H1 (cell line): ENCODE measurements at regions of chr3 and their contacts with region 1.

Region 1: GRCh38 chr3:44648564-44649229 is at the start of gene ZNF35:
- DNase-seq: peak; percentile 77 to 86
- H3K4me3 ChIP-seq: peak within 1 kb of the TSS; percentile 87 to 97 (median 90)
- H3K27ac ChIP-seq: peak within 1 kb of the TSS; percentile 61; the same call in 1 of the 2 replicates
- H3K4me1 ChIP-seq: no peaks in the 10 kb centered on the region
- H3K27me3 ChIP-seq: no peaks in the 10 kb centered on the region
- CTCF ChIP-seq: no peak; a peak in 1 of 4 replicates
- EP300 ChIP-seq: no peak
- POLR2A ChIP-seq: peak; percentile 79 to 87
- RAD21 ChIP-seq: peak in 1 of 2 experiments; percentile 2; a peak in 1 of 4 replicates
- total RNA-seq, gene ZNF35: 19.0 and 20.0 TPM in 2 replicates

Region 2: DNA sequence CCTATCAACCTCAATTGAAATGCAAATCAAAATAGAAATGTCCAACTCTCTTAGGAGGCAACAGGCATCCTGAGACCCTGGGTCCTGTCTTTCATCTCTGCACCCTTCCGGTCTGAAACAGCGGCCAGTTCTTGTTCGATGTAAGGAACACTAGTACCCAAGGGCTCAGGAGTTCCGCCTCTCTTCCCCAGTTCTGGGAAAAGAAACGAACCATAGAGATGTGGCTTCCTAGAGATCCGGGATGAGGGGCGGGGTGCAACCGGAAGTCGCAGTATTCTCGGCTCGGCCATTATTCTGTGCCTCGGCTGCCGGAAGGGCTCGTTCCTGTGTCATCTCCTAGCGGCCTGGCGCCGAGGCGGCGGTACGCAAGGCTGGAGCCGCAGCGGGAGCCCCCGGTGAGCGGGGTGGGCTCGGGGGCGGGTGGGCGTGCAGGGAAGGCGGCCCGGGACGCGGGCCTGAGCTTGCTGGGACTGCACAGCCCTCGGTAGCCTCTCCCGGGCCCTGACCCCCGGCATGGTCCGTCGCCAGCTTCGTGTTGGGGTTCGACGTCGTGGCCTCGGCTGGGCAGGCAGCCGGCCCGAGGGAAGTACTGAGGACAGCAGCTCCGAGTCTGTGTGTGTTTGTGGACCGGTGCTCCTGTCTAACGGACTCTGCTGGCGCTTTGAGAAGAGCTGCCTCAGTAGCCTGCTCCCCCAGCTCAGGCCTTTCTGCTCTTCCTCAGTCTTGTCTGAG is 23.8 kb before region 1 on chr3 and contains the start of gene ZNF197:
- CTCF ChIA-PET with region 1: interaction called, 6 read pairs
- POLR2A ChIA-PET with region 1: interaction called, 20 read pairs
- DNase-seq: peak; percentile 74 to 84
- H3K4me3 ChIP-seq: peak within 1 kb of the TSS; percentile 77 to 94 (median 82)
- H3K27ac ChIP-seq: peak within 1 kb of the TSS; percentile 67; the same call in 1 of the 2 replicates
- H3K4me1 ChIP-seq: peaks cover 0 to 5% (median 0%) of the 10 kb centered on the region in 4 experiments; a peak in 1 of 7 replicates
- H3K27me3 ChIP-seq: no peaks in the 10 kb centered on the region
- CTCF ChIP-seq: peak in 1 of 3 experiments; percentile 15; a peak in 1 of 4 replicates
- EP300 ChIP-seq: no peak
- POLR2A ChIP-seq: peak; percentile 42 to 68; a peak in 2 of 3 replicates
- RAD21 ChIP-seq: no peak
- total RNA-seq, gene ZNF197: 16.1 and 16.8 TPM in 2 replicates

Region 3: GRCh38 chr3:45078910-45079522 is 430.3 kb after region 1 on chr3:
- CTCF ChIA-PET with region 1: no interaction called
- POLR2A ChIA-PET with region 1: no interaction called
- DNase-seq: no peak
- H3K4me3 ChIP-seq: no peak overlapping the region
- H3K27ac ChIP-seq: no peak overlapping the region
- H3K4me1 ChIP-seq: no peaks in the 10 kb centered on the region
- H3K27me3 ChIP-seq: no peaks in the 10 kb centered on the region
- CTCF ChIP-seq: peak in 1 of 3 experiments; percentile 34; a peak in 1 of 4 replicates
- EP300 ChIP-seq: no peak
- POLR2A ChIP-seq: no peak
- RAD21 ChIP-seq: peak; percentile 31 to 32; a peak in 3 of 4 replicates

Region 4: DNA sequence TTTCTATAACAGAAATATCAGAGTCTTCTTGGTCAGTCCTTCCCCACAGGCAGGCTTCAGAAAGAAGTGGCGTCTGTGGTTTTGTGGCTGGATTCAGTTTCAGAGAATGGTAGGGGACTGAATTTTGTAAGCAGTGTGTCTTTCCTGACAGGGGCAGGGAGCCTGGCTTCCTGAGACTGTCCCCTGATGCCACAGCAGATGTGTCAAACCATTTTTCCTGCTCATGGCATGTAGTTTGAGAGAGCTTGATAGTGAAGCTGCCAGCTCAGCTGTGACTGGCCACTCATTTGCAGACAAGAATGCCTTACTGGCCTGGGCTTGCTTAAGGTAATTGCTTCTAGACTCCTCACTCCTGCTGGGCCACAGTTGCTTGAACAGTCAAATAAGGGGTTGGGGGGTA is 766.1 kb after region 1 on chr3:
- CTCF ChIA-PET with region 1: no interaction called
- POLR2A ChIA-PET with region 1: no interaction called
- DNase-seq: no peak
- H3K4me3 ChIP-seq: no peak overlapping the region
- H3K27ac ChIP-seq: no peak overlapping the region
- H3K4me1 ChIP-seq: no peaks in the 10 kb centered on the region
- H3K27me3 ChIP-seq: no peaks in the 10 kb centered on the region
- CTCF ChIP-seq: no peak
- EP300 ChIP-seq: no peak
- POLR2A ChIP-seq: no peak
- RAD21 ChIP-seq: no peak